ENCODE measurements at regions of chr1 and their contacts with region 1.

Region 1: DNA sequence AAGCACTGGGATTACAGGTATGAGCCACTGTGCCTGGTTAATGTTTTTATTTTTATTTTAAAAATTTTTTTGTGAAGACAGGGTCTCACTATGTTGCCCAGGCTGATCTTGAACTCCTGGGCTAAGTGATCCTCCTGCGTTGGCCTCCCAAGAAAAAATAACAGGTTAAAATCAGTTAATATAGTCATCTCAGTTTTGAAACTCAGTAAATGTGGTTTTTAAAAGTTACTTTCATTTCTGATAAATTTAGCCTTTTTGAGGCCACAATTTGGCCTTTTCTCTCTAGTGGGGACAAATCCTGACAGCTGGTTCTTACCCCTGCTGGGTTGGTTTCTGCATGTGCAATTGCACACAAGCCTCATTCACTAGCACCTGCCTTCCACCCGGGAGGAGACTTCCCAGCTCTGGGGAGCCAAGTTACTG is 13.3 kb downstream of the PMF1 start:
- DNase-seq: no peak
- H3K4me3 Mint-ChIP-seq: no peak overlapping the region
- H3K27ac Mint-ChIP-seq: no peak overlapping the region
- H3K4me1 Mint-ChIP-seq: peaks cover 17% of the 10 kb centered on the region
- H3K27me3 Mint-ChIP-seq: no peaks in the 10 kb centered on the region
- CTCF ChIP-seq: no peak

Region 2: DNA sequence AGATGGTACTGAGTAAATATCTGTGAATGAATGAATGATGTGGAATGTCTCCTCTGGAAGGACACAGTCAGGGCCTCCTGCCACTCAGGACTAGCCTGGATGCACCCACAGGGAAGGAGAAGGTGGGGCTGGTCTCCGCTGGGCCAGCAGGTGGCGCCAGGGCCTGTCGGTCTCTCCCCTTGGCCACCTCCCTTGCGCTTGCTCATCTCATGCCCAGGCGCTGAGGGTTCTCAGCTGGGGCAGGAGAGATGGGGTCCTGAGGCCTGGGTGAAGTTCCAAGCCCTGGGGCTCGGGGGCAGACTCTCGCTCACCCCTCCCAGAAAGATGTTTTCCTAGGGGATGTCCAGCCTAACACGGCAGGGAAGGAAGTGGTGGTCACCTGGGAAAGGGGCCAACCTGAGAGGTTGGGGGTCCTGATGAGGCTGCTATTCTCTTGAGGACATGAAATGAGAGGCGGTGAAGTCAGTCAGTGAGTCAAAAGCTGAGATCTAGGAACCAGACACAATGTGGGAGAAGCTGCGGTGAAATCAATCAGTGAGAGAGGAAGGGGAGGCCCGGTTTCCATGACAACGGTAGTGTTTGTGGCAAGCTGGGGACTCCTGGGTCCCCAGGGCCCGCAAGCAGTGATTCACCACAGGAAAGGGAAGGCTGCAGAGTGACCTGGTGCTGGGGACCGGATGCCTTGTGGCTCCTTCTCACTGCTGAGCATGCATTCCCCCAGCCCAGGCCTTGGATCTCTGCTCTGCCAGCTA is 129.3 kb before region 1 on chr1:
- CTCF ChIA-PET with region 1: interaction called, 14 read pairs
- intact Hi-C with region 1: no loop called
- DNase-seq: peak; percentile 97
- H3K4me3 Mint-ChIP-seq: peak overlapping the region; percentile 27
- H3K27ac Mint-ChIP-seq: peak overlapping the region; percentile 98
- H3K4me1 Mint-ChIP-seq: peaks cover 61% of the 10 kb centered on the region
- H3K27me3 Mint-ChIP-seq: no peaks in the 10 kb centered on the region
- CTCF ChIP-seq: peak; percentile 93

Region 3: GRCh38 chr1:156146020-156146768 is 79.9 kb before region 1 on chr1:
- CTCF ChIA-PET with region 1: interaction called, 55 read pairs
- intact Hi-C with region 1: loop called (anchors 1 kb)
- DNase-seq: peak; percentile 86
- H3K4me3 Mint-ChIP-seq: peak overlapping the region; percentile 4
- H3K27ac Mint-ChIP-seq: peak overlapping the region; percentile 72
- H3K4me1 Mint-ChIP-seq: peaks cover 21% of the 10 kb centered on the region
- H3K27me3 Mint-ChIP-seq: peaks cover 37% of the 10 kb centered on the region
- CTCF ChIP-seq: peak; percentile 68

Region 4: DNA sequence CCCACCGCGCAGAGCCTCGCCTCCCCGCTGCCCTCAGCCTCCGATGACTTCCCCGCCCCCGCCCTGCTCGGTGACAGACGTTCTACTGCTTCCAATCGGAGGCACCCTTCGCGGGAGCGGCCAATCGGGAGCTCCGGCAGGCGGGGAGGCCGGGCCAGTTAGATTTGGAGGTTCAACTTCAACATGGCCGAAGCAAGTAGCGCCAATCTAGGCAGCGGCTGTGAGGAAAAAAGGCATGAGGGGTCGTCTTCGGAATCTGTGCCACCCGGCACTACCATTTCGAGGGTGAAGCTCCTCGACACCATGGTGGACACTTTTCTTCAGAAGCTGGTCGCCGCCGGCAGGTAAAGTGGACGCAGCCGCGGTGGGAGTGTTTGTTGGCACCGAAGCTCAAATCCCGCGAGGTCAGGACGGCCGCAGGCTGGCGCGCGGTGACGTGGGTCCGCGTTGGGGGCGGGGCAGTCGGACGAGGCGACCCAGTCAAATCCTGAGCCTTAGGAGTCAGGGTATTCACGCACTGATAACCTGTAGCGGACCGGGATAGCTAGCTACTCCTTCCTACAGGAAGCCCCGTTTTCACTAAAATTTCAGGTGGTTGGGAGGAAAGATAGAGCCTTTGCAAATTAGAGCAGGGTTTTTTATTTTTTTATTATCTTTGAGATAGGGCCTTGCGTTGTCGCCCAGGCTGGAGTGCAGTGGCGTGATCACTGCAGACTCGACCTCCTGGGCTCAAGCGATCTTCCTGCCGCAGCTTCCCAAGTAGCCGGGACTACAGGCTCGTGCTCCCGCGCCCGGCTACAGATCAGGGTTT is 13.1 kb before region 1 on chr1 and contains the start of gene PMF1:
- CTCF ChIA-PET with region 1: interaction called, 33 read pairs
- intact Hi-C with region 1: no loop called
- DNase-seq: peak; percentile 98
- H3K4me3 Mint-ChIP-seq: peak within 1 kb of the TSS; percentile 90
- H3K27ac Mint-ChIP-seq: peak within 1 kb of the TSS; percentile 93
- H3K4me1 Mint-ChIP-seq: peaks cover 26% of the 10 kb centered on the region
- H3K27me3 Mint-ChIP-seq: no peaks in the 10 kb centered on the region
- CTCF ChIP-seq: no peak
- total RNA-seq, gene PMF1: 57.3 and 59.0 TPM in 2 replicates

Region 5: GRCh38 chr1:156298852-156299357 is 72.8 kb after region 1 on chr1 and contains the start of gene VHLL:
- CTCF ChIA-PET with region 1: no interaction called
- intact Hi-C with region 1: no loop called
- DNase-seq: no peak
- H3K4me3 Mint-ChIP-seq: no peak within 1 kb of the TSS
- H3K27ac Mint-ChIP-seq: no peak within 1 kb of the TSS
- H3K4me1 Mint-ChIP-seq: peaks cover 12% of the 10 kb centered on the region
- H3K27me3 Mint-ChIP-seq: no peaks in the 10 kb centered on the region
- CTCF ChIP-seq: no peak
- total RNA-seq, gene VHLL: 0.81 and 1.5 TPM in 2 replicates

Region 6: DNA sequence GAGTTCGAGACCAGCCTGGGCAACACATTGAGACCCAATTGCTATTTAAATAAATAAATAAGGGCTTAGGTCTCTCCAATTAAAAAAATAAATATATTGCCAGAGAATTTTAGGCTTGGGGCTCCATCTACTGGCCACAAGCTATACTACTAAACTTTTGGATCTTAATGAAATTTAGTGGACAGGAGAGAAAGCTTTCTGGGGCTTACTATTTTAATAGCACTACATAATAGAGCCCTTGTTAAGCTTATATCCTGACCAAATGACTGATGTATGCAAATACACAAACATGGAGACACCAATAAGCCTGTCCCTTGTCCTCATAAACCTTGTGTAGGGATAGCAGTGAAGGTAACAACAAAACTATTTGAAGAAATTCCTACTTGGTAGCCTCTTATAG is 93.5 kb after region 1 on chr1:
- CTCF ChIA-PET with region 1: interaction called, 12 read pairs
- intact Hi-C with region 1: no loop called
- DNase-seq: peak; percentile 39
- H3K4me3 Mint-ChIP-seq: no peak overlapping the region
- H3K27ac Mint-ChIP-seq: no peak overlapping the region
- H3K4me1 Mint-ChIP-seq: no peaks in the 10 kb centered on the region
- H3K27me3 Mint-ChIP-seq: no peaks in the 10 kb centered on the region
- CTCF ChIP-seq: peak; percentile 24

Region 7: DNA sequence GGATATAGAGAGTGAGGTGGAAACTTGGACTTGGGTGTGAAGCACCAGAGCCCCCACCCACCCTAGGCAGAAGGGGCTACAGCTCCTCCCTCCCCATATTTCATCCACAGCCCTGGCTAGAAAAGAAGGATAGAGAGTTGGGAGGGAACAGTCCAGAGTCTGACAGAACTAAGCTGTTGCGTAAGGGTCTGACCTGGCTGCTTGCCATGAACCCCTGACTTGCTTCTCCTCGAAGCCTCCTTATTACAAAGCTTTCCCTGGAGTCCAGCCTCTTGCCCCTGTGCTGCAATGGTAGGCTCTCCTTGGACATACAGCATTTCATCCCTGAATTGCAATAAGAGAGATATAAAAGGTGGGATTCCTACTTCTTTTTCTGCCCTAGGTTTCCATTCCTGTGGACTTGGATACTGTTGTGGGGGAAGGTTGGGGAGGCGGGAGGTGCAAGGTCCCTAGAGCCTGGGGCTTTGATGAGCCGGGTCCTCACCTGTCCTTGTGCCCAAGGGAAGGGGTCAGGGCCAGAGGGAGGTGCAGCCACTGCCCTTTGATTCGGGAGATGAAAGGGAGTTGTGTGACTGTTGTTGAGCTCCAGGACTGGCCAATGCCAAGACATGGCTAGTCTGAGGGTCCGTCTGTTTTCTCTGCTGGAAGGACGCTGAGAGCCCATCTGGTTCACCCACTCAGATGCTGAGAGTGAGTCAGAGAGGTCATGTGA is 145.6 kb after region 1 on chr1:
- CTCF ChIA-PET with region 1: no interaction called
- intact Hi-C with region 1: no loop called
- DNase-seq: peak; percentile 34
- H3K4me3 Mint-ChIP-seq: no peak overlapping the region
- H3K27ac Mint-ChIP-seq: no peak overlapping the region
- H3K4me1 Mint-ChIP-seq: peaks cover 7% of the 10 kb centered on the region
- H3K27me3 Mint-ChIP-seq: peaks cover 45% of the 10 kb centered on the region
- CTCF ChIP-seq: no peak